PC-9 (cell line): ENCODE measurements at regions of chr14 and their contacts with region 1.

Region 1: GRCh38 chr14:73477618-73478266 is 13.0 kb upstream of the RIOX1 start:
- DNase-seq: no peak
- H3K4me3 ChIP-seq: no peak overlapping the region
- H3K27ac ChIP-seq: no peak overlapping the region
- H3K4me1 ChIP-seq: no peaks in the 10 kb centered on the region
- H3K27me3 ChIP-seq: no peaks in the 10 kb centered on the region
- CTCF ChIP-seq: no peak

Region 2: GRCh38 chr14:73599499-73599898 is 121.8 kb after region 1 on chr14:
- CTCF ChIA-PET with region 1: interaction called, 15 read pairs
- POLR2A ChIA-PET with region 1: interaction called, 28 read pairs
- intact Hi-C with region 1: no loop called
- DNase-seq: no peak
- H3K4me3 ChIP-seq: no peak overlapping the region
- H3K27ac ChIP-seq: no peak overlapping the region
- H3K4me1 ChIP-seq: peaks cover 32% of the 10 kb centered on the region
- H3K27me3 ChIP-seq: no peaks in the 10 kb centered on the region
- CTCF ChIP-seq: no peak